ENCODE measurements at regions of chr5 and their contacts with region 1.

Region 1: DNA sequence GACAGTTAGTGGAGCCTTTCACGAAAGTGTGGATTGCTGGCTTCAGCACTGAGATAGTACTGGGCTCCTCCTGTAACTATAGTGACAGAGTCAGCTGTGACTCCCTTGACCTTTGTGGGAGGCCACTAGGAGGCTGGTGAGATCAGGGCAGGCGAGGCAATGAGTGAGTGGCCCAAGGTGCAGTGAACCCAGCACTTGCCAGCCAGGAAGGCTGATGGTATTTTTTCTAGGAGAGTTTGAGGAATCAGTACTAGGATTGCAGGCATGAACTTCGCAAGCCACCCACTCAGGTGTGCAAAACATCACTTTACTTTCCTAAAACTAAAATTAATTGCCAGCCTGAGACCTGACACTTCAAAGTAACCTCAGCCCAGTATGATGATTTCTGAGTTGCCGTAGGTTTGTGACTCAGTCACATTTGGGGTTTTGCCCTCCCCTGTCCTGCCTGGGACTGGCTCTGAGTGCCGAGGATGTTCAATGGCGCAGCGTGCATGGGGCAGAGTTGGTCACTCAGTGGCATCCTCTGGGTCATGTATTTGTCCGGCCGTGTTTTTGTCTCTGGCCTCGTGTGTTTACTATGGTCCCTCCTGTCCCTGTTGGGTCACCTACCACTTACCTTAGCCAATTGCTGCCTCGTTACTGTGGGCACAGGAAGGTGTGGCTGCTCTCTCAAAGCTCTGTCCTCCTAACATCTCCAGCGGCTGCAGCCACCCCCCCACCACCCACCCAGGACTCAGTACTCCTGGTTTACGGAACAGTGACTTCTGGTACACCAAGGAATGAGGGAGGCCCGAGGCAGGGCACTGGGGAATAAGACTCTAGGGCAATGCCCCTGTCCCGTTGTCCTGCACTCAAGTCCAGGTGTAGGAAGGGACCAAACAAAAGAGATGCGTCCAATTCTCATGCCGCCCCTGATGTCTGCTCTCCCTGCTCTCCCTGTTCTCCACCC is 67.2 kb downstream of the IL31RA start:
- DNase-seq: no peak
- H3K4me3 Mint-ChIP-seq: no peak overlapping the region
- H3K27ac Mint-ChIP-seq: no peak overlapping the region
- H3K4me1 Mint-ChIP-seq: peaks cover 31% of the 10 kb centered on the region
- H3K27me3 Mint-ChIP-seq: no peaks in the 10 kb centered on the region

Region 2: GRCh38 chr5:55711968-55712859 is 206.1 kb before region 1 on chr5 and contains the start of gene SLC38A9:
- intact Hi-C with region 1: loop called (anchors 5 kb)
- DNase-seq: peak; percentile 88
- H3K4me3 Mint-ChIP-seq: peak within 1 kb of the TSS; percentile 98
- H3K27ac Mint-ChIP-seq: peak within 1 kb of the TSS; percentile 90
- H3K4me1 Mint-ChIP-seq: peaks cover 30% of the 10 kb centered on the region
- H3K27me3 Mint-ChIP-seq: peaks cover 4% of the 10 kb centered on the region
- total RNA-seq, gene SLC38A9: 19.3 and 22.2 TPM in 2 replicates

Region 3: DNA sequence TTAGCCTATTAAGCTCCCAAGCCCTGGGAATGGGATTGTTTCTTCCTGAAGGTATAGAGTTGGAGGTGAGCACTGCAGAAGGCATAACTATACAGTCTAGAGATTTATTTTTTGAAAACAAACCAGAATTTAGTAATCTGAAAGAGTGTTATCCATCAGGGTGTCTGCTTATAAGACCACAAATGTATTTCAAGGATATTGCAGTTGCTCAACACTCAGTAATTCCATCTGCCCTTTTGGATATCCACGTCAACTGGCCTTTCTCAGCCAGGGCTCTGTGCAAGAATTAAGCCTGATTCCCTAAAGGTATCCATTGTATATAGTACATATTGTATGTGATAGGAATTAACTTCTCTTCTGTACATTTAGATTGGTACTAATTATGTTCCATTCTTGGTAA is 82.2 kb before region 1 on chr5:
- intact Hi-C with region 1: no loop called
- DNase-seq: no peak
- H3K4me3 Mint-ChIP-seq: no peak overlapping the region
- H3K27ac Mint-ChIP-seq: no peak overlapping the region
- H3K4me1 Mint-ChIP-seq: no peaks in the 10 kb centered on the region
- H3K27me3 Mint-ChIP-seq: no peaks in the 10 kb centered on the region

Region 4: DNA sequence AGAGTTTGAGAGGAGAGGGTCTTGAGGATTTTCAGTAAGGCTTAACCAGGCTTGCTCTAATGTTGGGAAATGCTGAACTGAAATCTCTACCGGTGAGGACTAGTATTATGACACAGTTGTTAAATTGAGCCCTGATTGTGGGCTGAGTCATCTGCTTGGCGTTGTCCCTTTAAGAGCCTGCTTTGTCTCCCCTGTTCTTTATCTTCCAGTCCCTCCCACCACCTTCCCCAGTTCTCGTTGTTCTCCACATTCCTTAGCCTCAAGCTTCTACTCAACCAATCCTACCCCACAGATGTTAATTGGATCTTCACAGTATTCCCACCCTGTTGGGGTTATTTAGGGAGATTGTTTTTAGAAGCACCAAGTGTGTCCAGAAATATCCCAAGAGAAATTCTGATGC is 257.1 kb after region 1 on chr5:
- intact Hi-C with region 1: no loop called
- DNase-seq: no peak
- H3K4me3 Mint-ChIP-seq: no peak overlapping the region
- H3K27ac Mint-ChIP-seq: no peak overlapping the region
- H3K4me1 Mint-ChIP-seq: peaks cover 16% of the 10 kb centered on the region
- H3K27me3 Mint-ChIP-seq: peaks cover 31% of the 10 kb centered on the region

Measured in activated T-helper 2 cell treated with anti-CD3 and anti-CD28 coated beads, Interferon-gamma antibody, Interleukin-2, Interleukin-4, amounts not matched to agents 10 μg/mL and 5 μg/mL and 100 μg/mL, durations not matched to agents 14 hours and 24 hours and 36 hours (primary cell).